ENCODE measurements at regions of chr3 and their contacts with region 1.

Region 1: GRCh38 chr3:105828703-105829102 is 40.1 kb downstream of the CBLB start:
- DNase-seq: no peak
- H3K4me3 ChIP-seq: no peak overlapping the region
- H3K27ac ChIP-seq: no peak overlapping the region
- H3K4me1 ChIP-seq: peaks cover 6% of the 10 kb centered on the region
- H3K27me3 ChIP-seq: no peaks in the 10 kb centered on the region
- CTCF ChIP-seq: no peak

Region 2: GRCh38 chr3:105700575-105700974 is 128.1 kb before region 1 on chr3:
- CTCF ChIA-PET with region 1: no interaction called
- POLR2A ChIA-PET with region 1: interaction called, 14 read pairs
- intact Hi-C with region 1: no loop called
- DNase-seq: no peak
- H3K4me3 ChIP-seq: no peak overlapping the region
- H3K27ac ChIP-seq: no peak overlapping the region
- H3K4me1 ChIP-seq: no peaks in the 10 kb centered on the region
- H3K27me3 ChIP-seq: no peaks in the 10 kb centered on the region
- CTCF ChIP-seq: no peak

Measured in PC-9 (cell line).